HCT116 (cell line): ENCODE measurements at regions of chr9 and their contacts with region 1.

Region 1: GRCh38 chr9:88593537-88594185 is 58.7 kb downstream of the NXNL2 start:
- DNase-seq: peak; percentile 34
- ATAC-seq: peak; percentile 81
- H3K4me3 ChIP-seq: no peak overlapping the region
- H3K27ac ChIP-seq: no peak overlapping the region
- H3K4me1 ChIP-seq: no peaks in the 10 kb centered on the region
- H3K27me3 ChIP-seq: no peaks in the 10 kb centered on the region; the same call in 1 of the 2 replicates
- CTCF ChIP-seq: peak; percentile 67 to 82 (median 79)
- POLR2A ChIP-seq: no peak
- RAD21 ChIP-seq: peak; percentile 81

Region 2: GRCh38 chr9:88645172-88645878 is 51.7 kb after region 1 on chr9:
- CTCF ChIA-PET with region 1: no interaction called
- POLR2A ChIA-PET with region 1: no interaction called
- RAD21 ChIA-PET with region 1: no interaction called
- intact Hi-C with region 1: no loop called
- DNase-seq: no peak
- ATAC-seq: no peak
- H3K4me3 ChIP-seq: no peak overlapping the region
- H3K27ac ChIP-seq: no peak overlapping the region
- H3K4me1 ChIP-seq: no peaks in the 10 kb centered on the region
- H3K27me3 ChIP-seq: no peaks in the 10 kb centered on the region
- CTCF ChIP-seq: no peak
- POLR2A ChIP-seq: no peak
- RAD21 ChIP-seq: no peak

Region 3: GRCh38 chr9:88741335-88741734 is 147.7 kb after region 1 on chr9:
- CTCF ChIA-PET with region 1: no interaction called
- POLR2A ChIA-PET with region 1: no interaction called
- RAD21 ChIA-PET with region 1: no interaction called
- intact Hi-C with region 1: loop called (anchors 1 kb)
- DNase-seq: no peak
- ATAC-seq: peak; percentile 74
- H3K4me3 ChIP-seq: no peak overlapping the region
- H3K27ac ChIP-seq: no peak overlapping the region
- H3K4me1 ChIP-seq: no peaks in the 10 kb centered on the region
- H3K27me3 ChIP-seq: peaks cover 20% of the 10 kb centered on the region; the same call in 1 of the 2 replicates
- CTCF ChIP-seq: peak; percentile 59 to 69 (median 62); a peak in 5 of 6 replicates
- POLR2A ChIP-seq: no peak
- RAD21 ChIP-seq: peak; percentile 70

Region 4: DNA sequence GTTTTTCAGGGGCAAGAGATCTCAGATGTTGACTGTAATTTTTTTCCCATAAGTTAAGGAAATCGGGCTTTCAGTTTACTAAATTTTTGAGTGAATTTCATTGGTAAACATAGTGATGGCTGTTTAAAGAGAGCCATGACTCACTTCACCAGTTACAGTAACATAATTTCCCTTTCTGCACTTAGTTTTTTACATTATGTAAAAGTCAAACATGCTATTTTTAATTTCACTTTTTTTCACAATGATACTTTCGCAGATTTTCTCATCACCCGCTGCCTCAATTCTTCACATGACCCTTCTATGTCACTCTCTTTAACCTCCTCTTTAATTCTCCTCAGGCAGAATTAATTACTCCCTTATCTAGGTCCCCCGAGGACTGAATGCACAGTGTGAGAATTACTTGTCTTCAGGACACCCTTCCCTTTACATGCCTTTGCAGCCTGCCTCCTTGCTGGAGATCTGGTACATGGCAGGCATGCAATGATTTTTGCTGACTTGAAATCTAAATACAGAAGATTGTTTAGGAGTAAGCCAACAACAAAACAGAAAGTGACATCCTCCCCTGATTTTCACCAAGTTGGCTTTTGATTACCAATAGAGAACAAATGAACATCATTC is 180.1 kb after region 1 on chr9:
- CTCF ChIA-PET with region 1: no interaction called
- POLR2A ChIA-PET with region 1: no interaction called
- RAD21 ChIA-PET with region 1: no interaction called
- intact Hi-C with region 1: no loop called
- DNase-seq: no peak
- ATAC-seq: no peak
- H3K4me3 ChIP-seq: no peak overlapping the region
- H3K27ac ChIP-seq: no peak overlapping the region
- H3K4me1 ChIP-seq: no peaks in the 10 kb centered on the region; a peak in 1 of 4 replicates
- H3K27me3 ChIP-seq: no peaks in the 10 kb centered on the region
- CTCF ChIP-seq: no peak
- POLR2A ChIP-seq: no peak
- RAD21 ChIP-seq: no peak

Region 5: DNA sequence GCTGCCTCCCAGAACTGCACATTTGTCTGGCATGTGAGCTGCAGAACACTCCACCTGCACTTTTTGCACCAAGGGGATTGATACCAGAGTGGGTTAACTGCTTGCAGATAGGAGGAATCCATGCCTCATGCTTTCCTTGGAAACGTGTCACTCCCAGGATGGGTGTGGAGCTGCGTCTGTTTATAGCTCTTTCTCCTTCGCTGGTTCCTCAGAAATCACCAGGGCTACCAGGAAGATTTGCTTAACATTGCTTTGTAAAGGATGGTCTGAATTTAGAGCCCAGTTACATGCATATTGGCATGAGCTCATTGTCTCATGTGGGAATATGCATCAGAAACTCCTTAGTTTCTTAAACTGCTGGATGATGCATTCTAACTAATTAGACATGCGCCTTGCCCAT is 1245.8 kb after region 1 on chr9:
- CTCF ChIA-PET with region 1: no interaction called
- POLR2A ChIA-PET with region 1: no interaction called
- RAD21 ChIA-PET with region 1: no interaction called
- intact Hi-C with region 1: no loop called
- DNase-seq: no peak
- ATAC-seq: no peak
- H3K4me3 ChIP-seq: no peak overlapping the region
- H3K27ac ChIP-seq: no peak overlapping the region
- H3K4me1 ChIP-seq: no peaks in the 10 kb centered on the region
- H3K27me3 ChIP-seq: peaks cover 5% of the 10 kb centered on the region; the same call in 1 of the 2 replicates
- CTCF ChIP-seq: no peak
- POLR2A ChIP-seq: no peak
- RAD21 ChIP-seq: no peak